ENCODE measurements at regions of chr12 and their contacts with region 1.

Region 1: DNA sequence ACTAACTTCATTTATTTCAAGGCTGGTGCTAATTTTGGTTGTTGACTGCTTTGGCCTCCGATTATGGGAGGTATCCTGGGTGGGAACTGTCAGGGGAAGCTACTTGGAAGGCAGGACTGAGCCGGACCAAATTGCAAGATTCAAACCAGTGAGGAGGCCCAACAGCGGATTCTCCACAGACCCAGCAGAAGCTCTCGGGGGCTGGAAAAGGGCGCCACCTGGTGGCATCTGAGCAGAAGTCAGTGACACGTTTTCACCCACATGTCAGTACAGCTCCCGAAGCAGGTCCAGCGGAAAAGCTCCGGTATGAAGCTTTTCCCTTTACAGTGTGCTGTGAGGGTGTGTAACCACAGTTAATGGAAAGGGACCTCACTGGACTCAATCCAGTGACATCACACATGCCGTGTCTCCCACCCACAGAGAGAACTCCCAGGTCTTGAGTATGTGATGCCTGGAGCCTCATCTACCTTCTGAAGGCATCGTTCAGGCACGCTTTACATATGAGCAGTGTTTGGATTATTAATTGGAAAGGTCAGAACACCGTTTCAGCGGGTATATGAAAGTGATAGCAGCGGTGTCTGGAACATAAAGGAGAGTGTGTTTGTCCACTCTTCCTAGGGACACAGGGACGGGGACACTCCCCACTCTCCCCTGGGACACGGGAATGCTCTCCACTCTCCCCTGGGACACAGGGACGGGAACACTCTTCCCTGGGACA is 3.6 kb upstream of the P2RX2 start:
- DNase-seq: peak; percentile 85
- CTCF ChIP-seq: peak; percentile 82

Region 2: GRCh38 chr12:132153501-132154340 is 461.3 kb before region 1 on chr12:
- CTCF ChIA-PET with region 1: interaction called, 11 read pairs
- POLR2A ChIA-PET with region 1: no interaction called
- DNase-seq: peak; percentile 86
- CTCF ChIP-seq: peak; percentile 94

Region 3: DNA sequence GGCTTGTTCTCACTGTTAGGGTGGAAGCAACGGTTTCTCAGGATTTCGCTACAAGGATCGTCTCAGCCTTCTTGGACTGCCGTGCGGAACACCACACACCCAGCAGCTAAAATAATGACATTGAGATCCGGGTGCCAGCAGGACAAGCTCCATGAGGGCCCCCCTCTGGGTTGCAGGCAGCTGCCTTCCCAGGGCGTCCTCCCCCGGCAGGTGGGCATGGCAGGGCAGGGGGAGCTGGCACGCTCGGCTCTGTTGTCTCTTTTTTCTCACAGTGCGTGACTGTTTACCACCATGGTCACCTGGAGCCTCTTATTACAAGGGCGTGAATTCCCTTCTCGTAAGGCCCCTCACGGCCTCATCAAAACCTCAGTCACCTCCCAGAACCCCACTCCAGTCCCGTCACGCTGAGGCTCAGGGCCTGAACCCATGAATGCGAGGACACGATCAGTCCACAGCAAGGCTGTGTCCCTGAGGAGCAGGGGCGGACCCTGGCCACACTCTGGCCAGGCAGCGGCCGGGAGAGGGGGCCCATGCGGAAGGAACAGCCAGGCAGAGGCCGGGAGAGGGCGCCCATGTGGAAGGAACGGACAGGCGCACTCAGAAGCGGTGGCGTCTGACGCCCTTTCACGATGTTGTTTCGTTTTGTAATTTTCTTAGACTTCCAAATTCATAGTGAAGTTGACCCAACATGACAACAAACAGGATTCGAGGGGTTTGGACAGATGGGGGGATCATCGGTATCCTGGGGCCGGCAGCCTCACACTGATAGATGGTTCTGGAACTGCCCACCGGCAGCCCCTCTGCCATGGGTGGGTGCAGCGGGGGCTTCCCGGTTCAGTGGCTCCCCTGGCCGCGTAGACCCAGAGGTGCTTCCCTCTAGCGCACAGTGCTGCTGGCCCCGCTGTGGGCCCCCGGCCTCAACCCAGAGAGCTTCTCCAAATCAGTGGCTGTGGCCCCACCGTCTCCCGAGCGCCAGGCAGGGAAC is 14.7 kb before region 1 on chr12:
- CTCF ChIA-PET with region 1: interaction called, 10 read pairs
- POLR2A ChIA-PET with region 1: no interaction called
- DNase-seq: peak; percentile 73
- CTCF ChIP-seq: peak; percentile 85

Measured in GM10248 (cell line).